ENCODE measurements at regions of chr15 and their contacts with region 1.

Region 1: GRCh38 chr15:75723847-75724660 is 11.4 kb upstream of the CSPG4 start:
- DNase-seq: peak; percentile 16 to 69 (median 25)
- H3K4me3 ChIP-seq: no peak overlapping the region
- H3K4me3 Mint-ChIP-seq: no peak overlapping the region
- H3K27ac ChIP-seq: no peak overlapping the region
- H3K27ac Mint-ChIP-seq: peak overlapping the region in 4 of 7 donors; percentile 16 to 83 (median 56)
- H3K4me1 ChIP-seq: no peaks in the 10 kb centered on the region
- H3K4me1 Mint-ChIP-seq: peaks cover 0 to 10% (median 1%) of the 10 kb centered on the region in 4 donors
- H3K27me3 ChIP-seq: no peaks in the 10 kb centered on the region
- H3K27me3 Mint-ChIP-seq: peaks cover 0 to 9% of the 10 kb centered on the region in 2 donors

Region 2: DNA sequence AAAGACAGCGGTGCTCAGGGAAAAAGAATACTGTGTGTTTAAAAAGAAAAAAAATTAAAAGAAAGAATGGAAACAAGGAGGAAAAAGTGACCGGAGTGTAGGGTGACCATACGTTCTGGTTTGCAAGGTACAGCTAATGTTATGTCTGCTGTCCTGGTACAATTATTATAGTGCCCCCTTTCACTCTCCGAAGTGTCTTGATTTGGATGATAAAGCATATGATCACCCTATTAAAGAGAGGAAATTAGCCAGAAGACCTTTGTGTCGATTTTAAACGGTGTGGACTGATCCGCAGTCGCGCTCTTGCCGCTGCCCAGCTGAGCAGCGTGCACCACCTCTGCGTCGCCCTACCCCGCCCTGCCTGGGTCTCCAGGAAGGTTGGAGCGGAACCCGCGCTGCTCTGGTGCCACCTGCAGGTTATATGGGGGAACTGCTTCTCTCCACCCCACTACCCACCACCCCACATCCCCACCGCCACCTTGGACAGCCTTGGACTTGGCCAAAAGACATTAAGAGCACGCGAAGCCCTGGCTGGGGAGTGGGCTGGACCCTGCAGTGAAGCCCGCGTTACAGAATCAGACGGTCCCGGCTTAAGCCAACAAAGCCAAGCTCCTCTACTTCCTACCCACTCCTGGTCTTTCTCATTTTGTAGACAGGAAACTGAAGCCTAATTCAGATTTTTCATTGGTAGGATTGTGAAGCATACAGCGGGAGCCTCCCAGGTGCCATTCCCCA is 78.0 kb after region 1 on chr15:
- CTCF ChIA-PET with region 1: interaction called, 104 read pairs
- POLR2A ChIA-PET with region 1: interaction called, 6 read pairs
- intact Hi-C with region 1: loop called (anchors 1 kb)
- DNase-seq: peak; percentile 69 to 75 (median 72)
- H3K4me3 ChIP-seq: no peak overlapping the region
- H3K4me3 Mint-ChIP-seq: peak overlapping the region in 7 of 8 donors; percentile 46 to 79 (median 65)
- H3K27ac ChIP-seq: no peak overlapping the region
- H3K27ac Mint-ChIP-seq: peak overlapping the region in 1 of 7 donors; percentile 62
- H3K4me1 ChIP-seq: peaks cover 8% of the 10 kb centered on the region
- H3K4me1 Mint-ChIP-seq: peaks cover 2 to 8% (median 4%) of the 10 kb centered on the region in 4 donors
- H3K27me3 ChIP-seq: peaks cover 12% of the 10 kb centered on the region
- H3K27me3 Mint-ChIP-seq: peaks cover 28 to 35% of the 10 kb centered on the region in 2 donors

Region 3: GRCh38 chr15:76994971-76995945 is 1271.2 kb after region 1 on chr15 and contains the start of gene PSTPIP1:
- CTCF ChIA-PET with region 1: no interaction called
- POLR2A ChIA-PET with region 1: no interaction called
- intact Hi-C with region 1: no loop called
- DNase-seq: peak; percentile 65 to 76 (median 74)
- H3K4me3 ChIP-seq: peak within 1 kb of the TSS; percentile 94 to 96
- H3K4me3 Mint-ChIP-seq: peak within 1 kb of the TSS; percentile 94 to 97 (median 96)
- H3K27ac ChIP-seq: peak within 1 kb of the TSS; percentile 79
- H3K27ac Mint-ChIP-seq: peak within 1 kb of the TSS; percentile 92 to 97 (median 96)
- H3K4me1 ChIP-seq: peaks cover 56% of the 10 kb centered on the region
- H3K4me1 Mint-ChIP-seq: peaks cover 38 to 92% (median 52%) of the 10 kb centered on the region in 4 donors
- H3K27me3 ChIP-seq: no peaks in the 10 kb centered on the region
- H3K27me3 Mint-ChIP-seq: no peaks in the 10 kb centered on the region
- total RNA-seq, gene PSTPIP1: 225 to 233 TPM